ENCODE measurements at regions of chr3 and their contacts with region 1.

Region 1: DNA sequence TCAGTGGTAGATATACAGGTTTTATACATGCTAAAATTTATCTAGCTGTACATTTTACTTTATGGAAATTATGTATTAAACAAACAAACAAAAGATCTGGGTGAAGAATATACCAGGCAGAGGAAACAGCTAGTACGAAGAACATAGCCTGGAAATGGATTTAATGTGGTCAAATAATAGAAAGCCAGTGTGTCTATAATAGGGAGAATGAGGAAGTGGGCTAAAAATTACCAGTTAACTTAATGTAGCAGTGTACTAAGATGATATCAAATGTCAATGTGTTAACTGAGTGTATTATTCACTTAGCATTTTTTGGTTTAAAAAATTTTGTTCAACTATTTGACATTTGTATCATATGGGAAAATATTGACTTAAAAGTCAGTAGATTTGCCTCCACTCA is 22.8 kb upstream of the SLC15A2 start:
- DNase-seq: no peak
- H3K4me3 ChIP-seq: no peak overlapping the region
- H3K27ac ChIP-seq: no peak overlapping the region
- H3K4me1 ChIP-seq: no peaks in the 10 kb centered on the region
- H3K27me3 ChIP-seq: no peaks in the 10 kb centered on the region
- CTCF ChIP-seq: no peak
- EP300 ChIP-seq: no peak
- POLR2A ChIP-seq: no peak
- RAD21 ChIP-seq: no peak

Region 2: GRCh38 chr3:121809249-121809648 is 62.2 kb before region 1 on chr3:
- CTCF ChIA-PET with region 1: no interaction called
- POLR2A ChIA-PET with region 1: no interaction called
- DNase-seq: no peak
- H3K4me3 ChIP-seq: no peak overlapping the region
- H3K27ac ChIP-seq: no peak overlapping the region
- H3K4me1 ChIP-seq: no peaks in the 10 kb centered on the region
- H3K27me3 ChIP-seq: no peaks in the 10 kb centered on the region
- CTCF ChIP-seq: no peak
- EP300 ChIP-seq: no peak
- POLR2A ChIP-seq: no peak
- RAD21 ChIP-seq: no peak

Region 3: GRCh38 chr3:121883507-121883906 is 12.1 kb after region 1 on chr3:
- CTCF ChIA-PET with region 1: interaction called, 11 read pairs
- POLR2A ChIA-PET with region 1: no interaction called
- DNase-seq: no peak
- H3K4me3 ChIP-seq: no peak overlapping the region
- H3K27ac ChIP-seq: no peak overlapping the region
- H3K4me1 ChIP-seq: no peaks in the 10 kb centered on the region
- H3K27me3 ChIP-seq: no peaks in the 10 kb centered on the region
- CTCF ChIP-seq: peak in 2 of 3 experiments; percentile 32 to 43; a peak in 2 of 4 replicates
- EP300 ChIP-seq: no peak
- POLR2A ChIP-seq: no peak
- RAD21 ChIP-seq: peak; percentile 48 to 66